ENCODE measurements at regions of chr22 and their contacts with region 1.

Region 1: GRCh38 chr22:37643225-37643847 is 3.9 kb downstream of the SH3BP1 start:
- DNase-seq: peak; percentile 91 to 93
- H3K4me3 ChIP-seq: peak overlapping the region in 1 of 4 donors; percentile 0
- H3K27ac ChIP-seq: peak overlapping the region in 1 of 5 donors; percentile 22
- H3K4me1 ChIP-seq: peaks cover 35 to 61% (median 46%) of the 10 kb centered on the region in 4 donors
- H3K27me3 ChIP-seq: peaks cover 0 to 8% (median 0%) of the 10 kb centered on the region in 3 donors
- CTCF ChIP-seq: peak in 5 of 7 experiments; percentile 80 to 97 (median 91)
- EP300 ChIP-seq: no peak
- POLR2A ChIP-seq: no peak

Region 2: DNA sequence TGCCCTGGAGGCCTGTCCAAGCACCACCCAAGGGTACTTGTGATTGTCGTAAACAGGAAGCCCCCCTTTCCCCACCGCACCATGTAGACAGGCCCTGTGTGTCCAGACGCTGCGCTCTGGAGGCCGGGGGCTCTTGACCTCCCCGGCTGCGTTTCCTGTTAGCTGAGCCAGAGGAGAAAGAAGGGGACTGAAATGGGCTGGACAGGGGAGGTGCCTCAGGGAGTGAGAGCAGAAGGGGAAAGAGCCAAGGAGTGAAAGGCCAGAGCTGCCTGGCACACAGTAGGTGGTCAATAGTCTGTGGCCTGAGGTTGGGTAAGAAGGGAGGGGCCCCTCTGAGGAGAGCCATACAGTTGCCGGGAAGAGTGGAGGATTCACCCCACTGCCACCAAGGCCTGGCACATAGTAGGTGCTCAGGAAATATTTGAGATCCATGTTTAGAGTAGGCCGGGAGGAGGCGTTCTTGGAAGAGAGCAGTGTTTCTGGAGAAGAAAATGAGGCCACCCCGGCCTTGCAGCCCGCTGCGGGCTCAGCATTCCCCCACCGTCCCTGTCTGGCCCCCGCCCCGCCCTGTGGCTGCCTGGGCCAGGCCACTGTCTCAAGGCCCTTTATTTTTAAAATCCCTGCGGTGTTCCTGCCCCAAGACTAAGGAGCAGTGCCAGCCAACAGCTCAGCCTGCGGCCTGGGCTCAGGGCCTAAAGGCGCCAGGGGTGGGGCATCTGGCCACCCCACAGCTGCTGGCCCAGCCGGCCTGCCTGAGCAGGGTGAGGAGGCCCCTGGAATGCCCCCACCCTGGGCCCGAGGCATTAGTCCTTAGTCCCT is 96.7 kb before region 1 on chr22:
- intact Hi-C with region 1: no loop called
- DNase-seq: peak; percentile 76 to 87
- H3K4me3 ChIP-seq: peak overlapping the region in 3 of 4 donors; percentile 19 to 37 (median 31)
- H3K27ac ChIP-seq: peak overlapping the region; percentile 93 to 98 (median 95)
- H3K4me1 ChIP-seq: peaks cover 55 to 85% (median 73%) of the 10 kb centered on the region in 4 donors
- H3K27me3 ChIP-seq: no peaks in the 10 kb centered on the region
- CTCF ChIP-seq: no peak
- EP300 ChIP-seq: no peak
- POLR2A ChIP-seq: no peak

Region 3: DNA sequence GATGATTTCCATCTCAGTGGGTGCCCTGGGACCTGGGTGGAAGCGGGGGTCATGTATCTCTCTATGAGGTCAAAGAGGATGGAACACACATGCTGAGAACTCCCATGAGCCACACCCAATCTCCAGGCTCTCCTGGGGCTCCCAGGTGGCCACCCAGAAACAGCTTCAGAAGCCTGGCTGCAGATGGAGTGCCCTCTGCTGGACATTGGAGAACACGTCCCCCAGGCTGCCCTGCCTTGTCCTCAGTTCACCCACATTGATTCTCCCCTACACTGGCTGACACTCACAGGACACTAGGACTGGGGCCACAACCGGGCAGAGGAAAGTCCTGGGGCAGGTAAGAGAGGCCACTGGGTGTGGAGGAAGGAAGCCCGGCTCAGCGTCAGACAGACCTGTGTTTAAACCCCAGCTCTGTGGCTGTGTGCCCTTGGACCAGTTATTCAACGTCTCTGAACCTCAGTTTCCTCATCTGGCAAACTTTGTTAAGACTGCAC is 38.3 kb after region 1 on chr22:
- intact Hi-C with region 1: loop called (anchors 5 kb)
- DNase-seq: peak; percentile 83 to 92
- H3K4me3 ChIP-seq: no peak overlapping the region
- H3K27ac ChIP-seq: peak overlapping the region in 1 of 5 donors; percentile 15
- H3K4me1 ChIP-seq: peaks cover 24 to 48% (median 40%) of the 10 kb centered on the region in 4 donors
- H3K27me3 ChIP-seq: no peaks in the 10 kb centered on the region
- CTCF ChIP-seq: peak in 5 of 7 experiments; percentile 82 to 90 (median 85)
- EP300 ChIP-seq: no peak
- POLR2A ChIP-seq: no peak

Region 4: GRCh38 chr22:37797874-37798500 is 154.7 kb after region 1 on chr22:
- intact Hi-C with region 1: loop called (anchors 10 kb)
- DNase-seq: peak in 1 of 2 donors; percentile 15
- H3K4me3 ChIP-seq: no peak overlapping the region
- H3K27ac ChIP-seq: no peak overlapping the region
- H3K4me1 ChIP-seq: peaks cover 4 to 15% (median 14%) of the 10 kb centered on the region in 4 donors
- H3K27me3 ChIP-seq: no peaks in the 10 kb centered on the region
- CTCF ChIP-seq: no peak
- EP300 ChIP-seq: no peak
- POLR2A ChIP-seq: no peak